ENCODE measurements at regions of chr1 and their contacts with region 1.

Region 1: DNA sequence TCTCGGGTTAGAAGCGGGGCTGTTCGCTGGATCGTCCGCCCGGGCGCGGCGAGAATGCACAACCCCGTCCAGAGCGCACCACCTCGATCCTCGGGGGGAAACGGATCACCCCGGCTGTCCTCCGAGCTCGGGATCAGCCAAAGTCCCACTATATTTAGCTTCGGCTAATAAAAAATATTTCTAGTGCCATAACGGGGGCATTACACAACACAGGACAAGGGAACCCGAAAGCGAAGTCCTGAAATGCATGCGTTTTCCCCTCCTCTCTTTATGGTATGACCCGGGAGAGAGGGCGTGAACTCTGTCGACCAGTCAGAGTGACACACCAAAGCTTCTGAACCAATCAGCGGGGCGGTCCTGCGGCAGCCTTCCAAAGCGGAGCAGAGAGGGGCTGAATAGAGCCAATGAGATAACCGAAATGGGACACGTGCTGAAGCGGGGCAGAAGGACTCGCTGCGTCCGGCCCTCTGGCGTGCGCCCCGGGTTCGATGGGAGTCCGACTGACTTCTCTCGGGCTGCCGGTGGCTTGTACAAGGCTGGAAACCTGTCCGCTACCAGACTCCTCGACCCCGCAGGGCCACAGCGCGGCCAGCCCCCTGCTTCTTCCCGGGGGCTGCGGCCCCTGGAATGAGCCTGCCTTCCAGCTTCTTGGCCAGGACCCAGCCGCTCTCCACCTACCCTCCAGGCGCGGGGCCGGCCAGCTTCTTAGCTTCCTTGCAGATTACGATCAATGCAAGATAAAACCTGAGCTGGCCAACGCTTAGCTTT is at the start of gene ALDH4A1:
- DNase-seq: peak; percentile 88 to 96 (median 93)
- H3K4me3 ChIP-seq: peak within 1 kb of the TSS; percentile 83
- H3K4me3 Mint-ChIP-seq: peak within 1 kb of the TSS; percentile 90 to 98 (median 91)
- H3K27ac ChIP-seq: peak within 1 kb of the TSS; percentile 77
- H3K27ac Mint-ChIP-seq: peak within 1 kb of the TSS; percentile 92 to 99 (median 96)
- H3K4me1 ChIP-seq: peaks cover 30% of the 10 kb centered on the region
- H3K4me1 Mint-ChIP-seq: peaks cover 22 to 25% (median 24%) of the 10 kb centered on the region in 3 donors
- H3K27me3 ChIP-seq: no peaks in the 10 kb centered on the region
- H3K27me3 Mint-ChIP-seq: no peaks in the 10 kb centered on the region
- total RNA-seq, gene ALDH4A1: 9.3 to 9.5 TPM

Region 2: DNA sequence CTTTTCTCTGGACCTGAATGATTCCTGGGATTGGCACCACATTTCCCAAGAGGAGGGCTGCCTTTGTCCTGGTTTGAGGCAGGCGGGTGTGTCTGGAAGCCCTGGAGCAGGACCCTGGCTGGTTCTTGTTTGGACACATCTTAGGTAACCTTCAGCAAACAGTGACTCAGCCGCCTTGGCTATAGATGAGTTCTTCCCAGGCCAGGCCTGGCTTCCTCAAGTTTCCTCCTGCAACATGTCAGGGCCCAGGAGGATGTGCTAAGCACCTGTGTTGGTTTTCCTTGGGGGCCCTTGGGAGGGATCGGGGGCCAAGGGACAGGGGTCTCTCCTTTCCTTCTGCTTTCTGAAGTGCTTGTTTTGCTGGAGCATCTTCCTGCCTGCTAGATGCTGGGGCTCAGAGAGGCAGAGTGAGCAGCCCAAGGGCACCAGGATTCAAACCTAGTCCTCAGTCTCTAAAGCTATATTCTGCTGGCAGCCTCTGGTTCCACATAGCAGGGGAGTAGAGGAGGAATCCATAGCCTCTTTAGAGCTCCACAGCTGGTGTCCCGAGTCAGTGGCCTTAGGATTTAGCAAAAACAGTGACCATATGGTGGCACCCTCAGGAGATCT is 233.8 kb before region 1 on chr1:
- CTCF ChIA-PET with region 1: no interaction called
- POLR2A ChIA-PET with region 1: no interaction called
- DNase-seq: no peak
- H3K4me3 ChIP-seq: no peak overlapping the region
- H3K4me3 Mint-ChIP-seq: no peak overlapping the region
- H3K27ac ChIP-seq: no peak overlapping the region
- H3K27ac Mint-ChIP-seq: no peak overlapping the region
- H3K4me1 ChIP-seq: peaks cover 16% of the 10 kb centered on the region
- H3K4me1 Mint-ChIP-seq: no peaks in the 10 kb centered on the region
- H3K27me3 ChIP-seq: no peaks in the 10 kb centered on the region
- H3K27me3 Mint-ChIP-seq: peaks cover 8 to 30% of the 10 kb centered on the region in 2 donors

Region 3: DNA sequence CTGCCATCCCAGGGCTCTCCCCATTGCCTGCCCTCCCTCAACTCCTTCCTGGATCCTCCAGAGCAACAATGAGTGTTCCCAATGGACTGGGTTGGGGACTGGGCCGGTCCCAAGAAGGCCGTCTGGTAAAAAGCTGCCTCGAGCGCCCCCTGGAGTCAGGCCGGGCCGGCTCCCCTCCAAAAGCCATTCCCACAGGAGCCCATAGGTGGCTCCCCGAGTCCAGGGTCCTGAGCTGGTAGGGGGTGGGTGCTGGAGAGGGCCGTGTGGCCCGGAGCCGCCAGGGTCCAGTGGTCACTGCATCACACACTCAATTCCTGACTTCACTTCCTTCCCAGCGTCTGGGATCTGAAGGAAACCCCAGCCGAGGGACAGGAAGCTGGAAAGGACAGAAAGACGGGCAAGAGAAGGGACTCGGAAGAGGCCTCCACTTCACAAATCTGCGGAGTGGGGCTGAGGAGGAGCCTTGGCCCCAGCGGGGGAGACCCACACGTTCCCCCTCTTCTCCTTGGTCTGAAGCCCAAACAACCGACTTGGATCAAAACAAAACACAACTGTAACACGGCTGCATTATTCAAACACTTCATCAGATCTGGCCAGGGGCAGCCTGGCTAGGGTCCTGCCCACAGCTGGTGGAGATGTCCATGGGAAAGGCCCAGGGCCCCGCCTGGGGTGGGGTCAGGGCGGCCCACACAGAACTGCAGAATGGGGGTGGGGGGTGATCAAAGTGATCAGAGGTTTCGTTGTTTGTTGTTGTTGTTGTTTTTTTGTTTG is 10.5 kb after region 1 on chr1:
- CTCF ChIA-PET with region 1: interaction called, 28 read pairs
- POLR2A ChIA-PET with region 1: no interaction called
- DNase-seq: peak; percentile 57 to 78 (median 65)
- H3K4me3 ChIP-seq: no peak overlapping the region
- H3K4me3 Mint-ChIP-seq: no peak overlapping the region
- H3K27ac ChIP-seq: no peak overlapping the region
- H3K27ac Mint-ChIP-seq: peak overlapping the region; percentile 66 to 93 (median 84)
- H3K4me1 ChIP-seq: no peaks in the 10 kb centered on the region
- H3K4me1 Mint-ChIP-seq: peaks cover 6 to 19% (median 9%) of the 10 kb centered on the region in 3 donors
- H3K27me3 ChIP-seq: no peaks in the 10 kb centered on the region
- H3K27me3 Mint-ChIP-seq: no peaks in the 10 kb centered on the region

Region 4: GRCh38 chr1:18949686-18950400 is 47.1 kb after region 1 on chr1:
- CTCF ChIA-PET with region 1: interaction called, 10 read pairs
- POLR2A ChIA-PET with region 1: interaction called, 3 read pairs
- DNase-seq: peak in 1 of 5 donors; percentile 31
- H3K4me3 ChIP-seq: peak overlapping the region; percentile 57
- H3K4me3 Mint-ChIP-seq: peak overlapping the region; percentile 93 to 98 (median 95)
- H3K27ac ChIP-seq: peak overlapping the region; percentile 99
- H3K27ac Mint-ChIP-seq: peak overlapping the region; percentile 99 to 100 (median 100)
- H3K4me1 ChIP-seq: peaks cover 98% of the 10 kb centered on the region
- H3K4me1 Mint-ChIP-seq: peaks cover 95 to 98% (median 97%) of the 10 kb centered on the region in 3 donors
- H3K27me3 ChIP-seq: no peaks in the 10 kb centered on the region
- H3K27me3 Mint-ChIP-seq: peaks cover 0 to 3% of the 10 kb centered on the region in 2 donors

Region 5: GRCh38 chr1:18965206-18966173 is 62.8 kb after region 1 on chr1:
- CTCF ChIA-PET with region 1: interaction called, 14 read pairs
- POLR2A ChIA-PET with region 1: no interaction called
- DNase-seq: no peak
- H3K4me3 ChIP-seq: no peak overlapping the region
- H3K4me3 Mint-ChIP-seq: no peak overlapping the region
- H3K27ac ChIP-seq: no peak overlapping the region
- H3K27ac Mint-ChIP-seq: no peak overlapping the region
- H3K4me1 ChIP-seq: no peaks in the 10 kb centered on the region
- H3K4me1 Mint-ChIP-seq: no peaks in the 10 kb centered on the region
- H3K27me3 ChIP-seq: peaks cover 3% of the 10 kb centered on the region
- H3K27me3 Mint-ChIP-seq: peaks cover 6% of the 10 kb centered on the region in 2 donors

Region 6: GRCh38 chr1:19074902-19075721 is 172.4 kb after region 1 on chr1:
- CTCF ChIA-PET with region 1: interaction called, 21 read pairs
- POLR2A ChIA-PET with region 1: interaction called, 9 read pairs
- DNase-seq: peak in 1 of 5 donors; percentile 46
- H3K4me3 ChIP-seq: peak overlapping the region; percentile 22
- H3K4me3 Mint-ChIP-seq: peak overlapping the region in 6 of 7 donors; percentile 30 to 80 (median 66)
- H3K27ac ChIP-seq: no peak overlapping the region
- H3K27ac Mint-ChIP-seq: peak overlapping the region; percentile 7 to 85 (median 58)
- H3K4me1 ChIP-seq: peaks cover 47% of the 10 kb centered on the region
- H3K4me1 Mint-ChIP-seq: peaks cover 42 to 61% (median 49%) of the 10 kb centered on the region in 3 donors
- H3K27me3 ChIP-seq: no peaks in the 10 kb centered on the region
- H3K27me3 Mint-ChIP-seq: no peaks in the 10 kb centered on the region

Region 7: GRCh38 chr1:19436716-19437476 is 534.2 kb after region 1 on chr1:
- CTCF ChIA-PET with region 1: no interaction called
- POLR2A ChIA-PET with region 1: no interaction called
- DNase-seq: no peak
- H3K4me3 ChIP-seq: no peak overlapping the region
- H3K4me3 Mint-ChIP-seq: peak overlapping the region in 1 of 7 donors; percentile 27
- H3K27ac ChIP-seq: no peak overlapping the region
- H3K27ac Mint-ChIP-seq: peak overlapping the region; percentile 20 to 91 (median 86)
- H3K4me1 ChIP-seq: peaks cover 86% of the 10 kb centered on the region
- H3K4me1 Mint-ChIP-seq: peaks cover 78 to 93% (median 90%) of the 10 kb centered on the region in 3 donors
- H3K27me3 ChIP-seq: no peaks in the 10 kb centered on the region
- H3K27me3 Mint-ChIP-seq: no peaks in the 10 kb centered on the region

Measured in CD8-positive, alpha-beta memory T cell (primary cell).